ENCODE measurements at regions of chr7 and their contacts with region 1.

Region 1: DNA sequence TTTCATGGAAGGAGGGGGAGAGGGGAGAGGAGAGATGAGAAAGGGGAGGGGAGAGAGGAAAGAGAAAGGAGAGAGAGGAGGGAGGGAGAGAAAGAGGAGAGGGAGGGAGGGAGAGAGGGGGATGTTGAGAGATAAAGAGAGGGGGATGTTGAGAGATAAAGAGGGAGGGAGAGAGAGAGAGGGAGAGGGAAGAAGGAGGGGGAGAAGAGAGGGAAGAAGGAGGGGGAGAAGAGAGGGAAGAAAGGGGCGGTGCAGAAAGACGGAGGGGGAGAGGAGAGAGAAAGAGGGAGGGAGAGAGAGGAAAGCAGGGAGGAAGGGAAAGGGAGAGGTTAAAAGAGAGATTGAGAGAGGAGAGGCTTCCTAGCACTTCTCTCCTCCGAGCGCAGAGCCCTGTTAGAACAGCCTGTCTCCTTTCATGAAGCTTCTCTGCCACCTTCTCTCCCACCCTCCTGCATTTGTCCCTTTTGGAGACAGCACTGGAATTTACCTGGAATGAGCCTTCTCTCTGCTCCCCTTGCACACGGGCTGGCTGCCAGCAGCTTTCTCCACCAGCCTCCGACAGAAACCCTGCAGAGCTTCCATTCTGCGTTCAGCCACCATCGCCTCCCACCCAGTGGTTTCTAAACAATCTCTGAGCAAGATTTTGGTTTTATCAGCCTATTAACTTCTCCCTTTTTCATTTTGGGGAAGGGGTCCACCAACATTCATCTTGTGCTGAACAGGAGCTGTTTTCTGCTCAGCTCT is 74.0 kb upstream of the CARD11 start:
- DNase-seq: peak; percentile 21 to 67 (median 67)
- H3K4me3 ChIP-seq: no peak overlapping the region
- H3K27ac ChIP-seq: no peak overlapping the region
- H3K4me1 ChIP-seq: peaks cover 4 to 35% (median 33%) of the 10 kb centered on the region in 4 experiments
- H3K27me3 ChIP-seq: no peaks in the 10 kb centered on the region

Region 2: GRCh38 chr7:3128462-3129173 is 11.0 kb after region 1 on chr7:
- CTCF ChIA-PET with region 1: interaction called, 12 read pairs
- POLR2A ChIA-PET with region 1: no interaction called
- DNase-seq: no peak
- H3K4me3 ChIP-seq: no peak overlapping the region
- H3K27ac ChIP-seq: no peak overlapping the region
- H3K4me1 ChIP-seq: peaks cover 0 to 9% (median under 1%) of the 10 kb centered on the region in 4 experiments
- H3K27me3 ChIP-seq: no peaks in the 10 kb centered on the region

Measured in common myeloid progenitor, CD34-positive (primary cell).